CD4-positive, alpha-beta T cell (primary cell): ENCODE measurements at regions of chr2 and their contacts with region 1.

Region 1: DNA sequence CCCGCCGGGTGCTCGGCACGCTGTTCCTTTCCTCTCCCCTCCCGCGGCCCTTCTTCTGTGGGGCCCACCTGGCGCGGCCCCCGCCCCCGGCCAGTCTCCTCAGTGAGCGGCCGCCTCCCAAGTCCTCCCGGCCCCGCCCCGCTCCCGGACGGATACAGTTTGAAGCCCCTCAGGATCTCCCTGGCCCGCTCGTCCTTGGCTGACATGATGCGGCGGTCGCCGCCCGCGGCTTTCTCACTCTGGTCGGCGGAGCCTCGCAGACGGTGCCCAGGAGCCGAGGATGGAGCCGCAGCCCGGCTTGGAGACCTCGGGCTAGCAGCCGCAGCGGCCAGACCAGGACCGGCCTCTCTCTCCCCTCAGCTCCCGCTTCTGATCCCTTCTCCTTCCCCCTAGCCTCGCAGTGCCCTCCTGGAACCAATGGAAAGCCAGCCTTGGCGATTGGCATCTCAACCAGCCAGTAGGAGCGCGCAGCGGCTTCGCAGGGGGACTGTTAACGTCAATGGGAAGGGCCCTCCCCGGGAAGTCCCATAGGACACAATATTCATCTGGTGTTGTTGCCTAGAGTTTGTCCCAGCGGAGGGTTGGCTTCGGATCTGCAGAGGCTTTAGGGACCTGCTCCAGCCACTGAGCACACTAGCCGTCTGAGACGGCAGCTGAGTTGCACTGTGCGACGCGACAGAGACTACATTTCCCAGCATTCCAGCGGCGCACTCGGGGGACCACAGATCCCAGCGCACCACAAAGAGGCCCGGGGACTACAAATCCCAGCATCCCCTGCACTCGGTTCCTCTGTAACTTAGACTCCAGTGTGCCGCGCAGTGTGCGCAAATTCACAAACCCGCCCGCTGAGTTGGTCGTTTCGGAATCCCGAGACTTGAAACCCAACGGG is at the start of gene PDE6D:
- DNase-seq: peak; percentile 91 to 97 (median 95)
- ATAC-seq: peak; percentile 89
- H3K4me3 ChIP-seq: peak within 1 kb of the TSS; percentile 90
- H3K4me3 Mint-ChIP-seq: peak within 1 kb of the TSS; percentile 94
- H3K27ac ChIP-seq: peak within 1 kb of the TSS; percentile 71 to 78
- H3K27ac Mint-ChIP-seq: peak within 1 kb of the TSS; percentile 94
- H3K4me1 ChIP-seq: peaks cover 36% of the 10 kb centered on the region
- H3K4me1 Mint-ChIP-seq: peaks cover 71% of the 10 kb centered on the region
- H3K27me3 ChIP-seq: no peaks in the 10 kb centered on the region
- H3K27me3 Mint-ChIP-seq: no peaks in the 10 kb centered on the region
- CTCF ChIP-seq: no peak
- total RNA-seq, gene PDE6D: 5.9 to 7.0 TPM

Region 2: DNA sequence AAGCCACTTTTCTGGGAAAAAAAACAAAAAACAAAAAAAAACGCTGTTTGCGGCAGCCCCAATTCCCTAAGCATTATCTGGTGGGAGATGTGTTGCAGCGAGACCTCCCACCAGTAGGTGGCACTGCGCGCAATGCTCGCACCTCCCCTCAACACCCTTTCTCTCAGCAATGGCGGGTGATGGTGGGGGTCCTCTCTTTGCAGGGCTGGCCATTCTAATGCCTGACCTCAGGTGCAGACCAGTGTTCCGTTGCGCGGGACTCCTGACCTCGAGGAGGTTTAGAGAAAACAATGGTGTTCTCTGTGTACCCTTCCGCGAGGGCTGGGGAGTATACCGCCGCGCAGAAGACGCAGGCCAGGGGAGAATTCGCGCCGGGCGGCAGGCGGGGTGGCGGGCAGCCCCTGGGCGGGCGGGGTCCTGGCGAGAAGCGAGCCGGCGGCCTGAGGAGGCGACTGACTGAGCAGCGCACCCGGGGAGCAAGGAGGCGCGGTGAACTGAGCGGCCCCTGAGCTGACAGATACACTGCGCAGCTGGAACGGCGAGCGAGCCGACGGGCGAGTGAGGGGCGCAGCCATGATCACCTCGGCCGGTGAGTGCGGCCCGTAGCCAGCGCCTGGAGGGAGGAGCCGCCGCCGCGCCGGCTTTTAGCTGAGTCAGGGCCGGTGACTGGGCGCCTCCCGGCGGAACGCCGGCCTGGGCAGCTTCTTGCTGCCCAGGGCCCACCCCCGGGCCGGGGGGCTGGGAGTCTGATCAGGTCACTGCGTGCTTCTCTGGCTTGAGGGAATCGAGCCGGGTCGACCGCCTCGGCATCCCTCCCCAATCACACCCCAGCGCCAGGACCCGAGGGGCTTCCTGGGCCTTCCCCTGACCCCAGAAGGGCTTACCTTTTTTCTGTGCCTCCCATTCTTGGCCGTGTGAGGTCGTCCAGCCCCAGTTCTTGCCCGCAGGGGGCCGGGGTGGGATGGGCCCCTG is 724.4 kb before region 1 on chr2 and contains the start of gene PSMD1:
- CTCF ChIA-PET with region 1: no interaction called
- POLR2A ChIA-PET with region 1: no interaction called
- intact Hi-C with region 1: loop called in 1 of 2 experiments (anchors 5 kb)
- DNase-seq: peak; percentile 88 to 97 (median 93)
- ATAC-seq: peak; percentile 81
- H3K4me3 ChIP-seq: peak within 1 kb of the TSS; percentile 95
- H3K4me3 Mint-ChIP-seq: peak within 1 kb of the TSS; percentile 100
- H3K27ac ChIP-seq: peak within 1 kb of the TSS; percentile 80 to 83
- H3K27ac Mint-ChIP-seq: peak within 1 kb of the TSS; percentile 98
- H3K4me1 ChIP-seq: peaks cover 34% of the 10 kb centered on the region
- H3K4me1 Mint-ChIP-seq: peaks cover 60% of the 10 kb centered on the region
- H3K27me3 ChIP-seq: no peaks in the 10 kb centered on the region
- H3K27me3 Mint-ChIP-seq: peaks cover 12% of the 10 kb centered on the region
- CTCF ChIP-seq: peak; percentile 94
- total RNA-seq, gene PSMD1: 27.9 to 31.3 TPM

Region 3: GRCh38 chr2:231612179-231613053 is 168.7 kb before region 1 on chr2:
- CTCF ChIA-PET with region 1: no interaction called
- POLR2A ChIA-PET with region 1: interaction called, 3 read pairs
- intact Hi-C with region 1: loop called (anchors 5 kb)
- DNase-seq: peak; percentile 79 to 93 (median 86)
- ATAC-seq: peak; percentile 78
- H3K4me3 ChIP-seq: peak overlapping the region; percentile 59
- H3K4me3 Mint-ChIP-seq: peak overlapping the region; percentile 90
- H3K27ac ChIP-seq: no peak overlapping the region
- H3K27ac Mint-ChIP-seq: peak overlapping the region; percentile 74
- H3K4me1 ChIP-seq: peaks cover 34% of the 10 kb centered on the region
- H3K4me1 Mint-ChIP-seq: peaks cover 47% of the 10 kb centered on the region
- H3K27me3 ChIP-seq: no peaks in the 10 kb centered on the region
- H3K27me3 Mint-ChIP-seq: no peaks in the 10 kb centered on the region
- CTCF ChIP-seq: peak; percentile 89

Region 4: GRCh38 chr2:231674587-231675338 is 106.4 kb before region 1 on chr2:
- CTCF ChIA-PET with region 1: interaction called, 7 read pairs
- POLR2A ChIA-PET with region 1: no interaction called
- intact Hi-C with region 1: loop called in 1 of 2 experiments (anchors 5 kb)
- DNase-seq: peak; percentile 22 to 75 (median 46)
- ATAC-seq: peak; percentile 50
- H3K4me3 ChIP-seq: no peak overlapping the region
- H3K4me3 Mint-ChIP-seq: no peak overlapping the region
- H3K27ac ChIP-seq: no peak overlapping the region
- H3K27ac Mint-ChIP-seq: no peak overlapping the region
- H3K4me1 ChIP-seq: peaks cover 15% of the 10 kb centered on the region
- H3K4me1 Mint-ChIP-seq: peaks cover 5% of the 10 kb centered on the region
- H3K27me3 ChIP-seq: peaks cover 0 to under 1% of the 10 kb centered on the region in 2 experiments
- H3K27me3 Mint-ChIP-seq: peaks cover 4% of the 10 kb centered on the region
- CTCF ChIP-seq: peak; percentile 72

Region 5: DNA sequence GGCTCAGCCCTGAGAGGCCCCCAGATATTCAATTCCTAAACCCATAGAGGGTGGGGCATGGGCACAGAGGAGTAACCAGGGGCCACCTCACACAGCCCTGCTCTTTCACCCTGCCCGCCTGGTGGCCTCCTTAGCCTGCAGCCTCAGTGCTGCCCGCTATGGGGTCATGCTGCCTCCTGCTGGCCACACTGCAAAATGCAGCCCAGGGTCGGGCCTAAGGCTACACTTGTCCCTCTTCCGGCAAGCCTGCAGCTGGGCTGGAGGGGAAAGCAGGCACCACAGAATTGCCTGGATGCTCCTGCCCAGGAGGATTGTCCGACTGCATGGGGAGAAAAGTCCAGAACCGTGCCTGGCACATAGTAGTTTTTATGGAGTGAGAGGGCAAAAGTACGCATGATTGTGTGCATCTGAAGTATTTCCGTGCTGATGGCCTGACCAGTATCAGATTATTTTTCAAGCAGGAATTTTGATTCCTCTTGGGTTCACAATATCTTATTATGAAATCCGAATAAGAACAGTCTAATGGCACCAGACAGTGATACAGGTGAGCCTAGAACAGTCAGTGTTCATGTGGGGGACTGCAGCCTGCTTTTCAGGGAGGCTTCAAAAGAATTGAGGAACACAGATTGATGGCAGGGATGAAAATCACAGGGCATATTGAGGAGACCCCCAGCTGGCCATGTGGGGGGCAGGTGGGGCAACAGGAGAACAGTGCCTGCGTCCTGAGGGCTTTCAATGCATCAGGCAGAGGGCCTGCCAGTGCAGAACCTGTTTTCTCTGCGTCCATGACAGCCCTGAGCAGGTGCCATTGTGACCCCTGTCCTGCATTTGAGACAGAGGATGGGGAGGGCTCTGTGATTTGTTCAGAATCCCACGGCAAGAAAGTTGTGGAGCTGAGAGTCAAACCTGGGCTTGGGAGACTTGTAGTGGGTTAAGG is 546.2 kb after region 1 on chr2:
- CTCF ChIA-PET with region 1: no interaction called
- POLR2A ChIA-PET with region 1: no interaction called
- intact Hi-C with region 1: loop called in 1 of 2 experiments (anchors 10 kb)
- DNase-seq: peak; percentile 75 to 89 (median 84)
- ATAC-seq: peak; percentile 92
- H3K4me3 ChIP-seq: no peak overlapping the region
- H3K4me3 Mint-ChIP-seq: no peak overlapping the region
- H3K27ac ChIP-seq: no peak overlapping the region
- H3K27ac Mint-ChIP-seq: peak overlapping the region; percentile 49
- H3K4me1 ChIP-seq: peaks cover 25% of the 10 kb centered on the region
- H3K4me1 Mint-ChIP-seq: peaks cover 22% of the 10 kb centered on the region
- H3K27me3 ChIP-seq: no peaks in the 10 kb centered on the region
- H3K27me3 Mint-ChIP-seq: no peaks in the 10 kb centered on the region
- CTCF ChIP-seq: peak; percentile 93